ENCODE measurements at regions of chr22 and their contacts with region 1.

Region 1: GRCh38 chr22:36180038-36180880 is 19.7 kb upstream of the APOL3 start:
- H3K4me3 Mint-ChIP-seq: no peak overlapping the region
- H3K27ac Mint-ChIP-seq: no peak overlapping the region
- H3K4me1 Mint-ChIP-seq: peaks cover 6% of the 10 kb centered on the region
- H3K27me3 Mint-ChIP-seq: no peaks in the 10 kb centered on the region

Region 2: GRCh38 chr22:36055376-36056295 is 124.6 kb before region 1 on chr22:
- intact Hi-C with region 1: no loop called
- H3K4me3 Mint-ChIP-seq: no peak overlapping the region
- H3K27ac Mint-ChIP-seq: no peak overlapping the region
- H3K4me1 Mint-ChIP-seq: no peaks in the 10 kb centered on the region
- H3K27me3 Mint-ChIP-seq: peaks cover 9% of the 10 kb centered on the region

Region 3: DNA sequence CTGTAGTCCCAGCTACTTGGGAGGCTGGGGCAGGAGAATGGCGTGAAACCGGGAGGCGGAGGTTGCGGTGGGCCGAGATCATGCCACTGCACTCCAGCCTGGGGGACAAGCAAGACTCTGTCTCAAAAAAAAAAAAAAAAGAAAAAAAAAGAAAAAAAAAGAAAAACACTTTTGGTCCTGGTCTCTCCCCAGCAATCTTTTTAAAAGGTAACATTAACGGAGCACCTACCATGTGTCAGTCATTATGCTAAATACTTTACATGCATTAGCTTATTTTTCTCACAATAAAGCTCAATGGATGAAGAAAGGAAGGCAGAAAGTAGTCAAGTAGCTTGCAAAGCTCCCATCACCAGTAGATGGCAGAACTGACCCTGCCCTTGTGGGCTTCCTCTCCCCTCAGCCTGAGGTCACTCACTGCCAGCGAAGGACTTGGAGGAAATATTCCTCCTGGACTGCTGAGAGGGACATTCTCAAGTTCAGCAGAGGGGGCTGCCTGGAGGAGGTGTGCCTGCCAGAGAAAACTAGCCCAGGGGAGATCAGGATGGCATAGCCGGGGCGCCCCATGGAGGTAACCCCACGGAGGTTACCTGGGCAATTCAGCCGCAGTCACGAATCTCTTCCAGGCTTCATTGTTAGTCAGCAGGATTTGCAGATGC is 35.2 kb before region 1 on chr22:
- intact Hi-C with region 1: loop called (anchors 1 kb)
- H3K4me3 Mint-ChIP-seq: no peak overlapping the region
- H3K27ac Mint-ChIP-seq: no peak overlapping the region
- H3K4me1 Mint-ChIP-seq: peaks cover 33% of the 10 kb centered on the region
- H3K27me3 Mint-ChIP-seq: no peaks in the 10 kb centered on the region

Measured in dendritic cell treated with granulocyte-macrophage colony-stimulating factor and Interleukin-4, amounts not matched to agents 40 ng/mL and 50 ng/mL, for 4 days (primary cell).